HAP-1 (cell line): ENCODE measurements at regions of chr6 and their contacts with region 1.

Region 1: GRCh38 chr6:112307707-112308106 is 39.4 kb upstream of the RFPL4B start:
- DNase-seq: no peak
- H3K4me3 ChIP-seq: no peak overlapping the region
- H3K4me1 ChIP-seq: peaks cover 10% of the 10 kb centered on the region; the same call in 1 of the 2 replicates
- H3K27me3 ChIP-seq: no peaks in the 10 kb centered on the region

Region 2: DNA sequence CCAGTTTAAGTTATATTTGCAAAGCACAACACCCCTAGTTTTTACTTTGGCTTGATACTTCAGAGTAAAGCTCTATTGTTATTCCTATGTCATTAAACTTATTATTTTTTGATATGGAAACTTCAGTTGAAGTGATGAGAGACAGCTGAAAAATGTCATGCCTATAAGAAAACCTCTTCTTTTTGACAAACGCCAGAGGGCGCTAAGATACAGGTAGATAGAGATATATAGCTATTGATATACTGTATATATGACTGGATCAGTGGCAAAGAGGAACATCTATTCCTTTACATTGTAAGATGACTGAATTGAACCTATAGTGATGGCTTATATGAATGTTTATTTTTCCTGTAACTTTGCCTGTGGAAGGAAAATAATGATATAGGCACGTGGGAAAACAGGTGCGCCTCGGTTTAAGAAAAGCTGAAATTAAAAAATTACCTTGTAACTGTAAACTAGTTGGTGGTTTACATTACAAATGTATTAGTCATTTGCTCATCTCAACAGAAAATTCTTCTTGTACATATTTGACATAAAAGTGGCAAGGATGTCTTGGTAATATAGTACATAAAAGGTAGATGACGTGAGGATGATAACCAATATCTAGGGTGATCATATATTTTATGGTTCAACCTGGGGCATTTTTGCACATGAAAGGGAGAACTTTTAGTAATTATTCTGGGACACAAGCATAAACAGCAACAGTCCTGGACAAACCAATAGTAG is 127.4 kb before region 1 on chr6:
- in situ Hi-C with region 1: loop called (anchors 5 kb)
- DNase-seq: peak; percentile 75 to 89
- H3K4me3 ChIP-seq: no peak overlapping the region
- H3K4me1 ChIP-seq: no peaks in the 10 kb centered on the region
- H3K27me3 ChIP-seq: no peaks in the 10 kb centered on the region

Region 3: GRCh38 chr6:112348891-112349635 is 41.4 kb after region 1 on chr6:
- in situ Hi-C with region 1: no loop called
- DNase-seq: no peak
- H3K4me3 ChIP-seq: no peak overlapping the region
- H3K4me1 ChIP-seq: no peaks in the 10 kb centered on the region
- H3K27me3 ChIP-seq: no peaks in the 10 kb centered on the region; the same call in 1 of the 2 replicates